Panc1 (cell line): ENCODE measurements at regions of chr4 and their contacts with region 1.

Region 1: DNA sequence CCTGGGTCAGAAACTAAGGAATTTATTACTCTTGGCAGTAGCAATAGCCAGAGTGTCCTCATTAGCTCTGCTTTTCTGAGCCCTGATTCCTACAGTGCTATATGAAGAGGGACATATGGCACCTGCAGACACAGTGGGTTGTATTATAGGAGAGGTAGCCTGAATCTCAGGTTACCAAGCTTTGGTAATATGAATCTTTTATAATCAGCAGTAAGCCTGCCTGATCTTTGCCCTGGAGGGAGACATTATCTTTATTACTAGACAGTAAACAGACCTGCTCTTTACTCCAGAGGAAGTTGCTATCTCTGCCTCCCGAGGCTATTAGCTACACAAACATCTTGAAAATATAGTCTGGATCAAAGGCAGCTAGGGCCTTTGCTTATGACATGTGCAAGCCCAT is 62.5 kb upstream of the HOPX start:
- DNase-seq: no peak
- ATAC-seq: no peak
- H3K4me3 ChIP-seq: no peak overlapping the region
- H3K27ac ChIP-seq: no peak overlapping the region
- H3K4me1 ChIP-seq: no peaks in the 10 kb centered on the region; the same call in 1 of the 2 replicates
- H3K27me3 ChIP-seq: no peaks in the 10 kb centered on the region
- CTCF ChIP-seq: no peak

Region 2: GRCh38 chr4:56712049-56712448 is 31.5 kb before region 1 on chr4:
- CTCF ChIA-PET with region 1: no interaction called
- POLR2A ChIA-PET with region 1: no interaction called
- in situ Hi-C with region 1: no loop called
- intact Hi-C with region 1: no loop called
- DNase-seq: no peak
- ATAC-seq: no peak
- H3K4me3 ChIP-seq: no peak overlapping the region
- H3K27ac ChIP-seq: no peak overlapping the region
- H3K4me1 ChIP-seq: no peaks in the 10 kb centered on the region
- H3K27me3 ChIP-seq: no peaks in the 10 kb centered on the region; the same call in 1 of the 2 replicates
- CTCF ChIP-seq: no peak

Region 3: GRCh38 chr4:56762497-56763250 is 19.1 kb after region 1 on chr4:
- CTCF ChIA-PET with region 1: interaction called, 10 read pairs
- POLR2A ChIA-PET with region 1: no interaction called
- in situ Hi-C with region 1: no loop called
- intact Hi-C with region 1: no loop called
- DNase-seq: no peak
- ATAC-seq: no peak
- H3K4me3 ChIP-seq: no peak overlapping the region
- H3K27ac ChIP-seq: no peak overlapping the region
- H3K4me1 ChIP-seq: no peaks in the 10 kb centered on the region
- H3K27me3 ChIP-seq: no peaks in the 10 kb centered on the region
- CTCF ChIP-seq: no peak

Region 4: DNA sequence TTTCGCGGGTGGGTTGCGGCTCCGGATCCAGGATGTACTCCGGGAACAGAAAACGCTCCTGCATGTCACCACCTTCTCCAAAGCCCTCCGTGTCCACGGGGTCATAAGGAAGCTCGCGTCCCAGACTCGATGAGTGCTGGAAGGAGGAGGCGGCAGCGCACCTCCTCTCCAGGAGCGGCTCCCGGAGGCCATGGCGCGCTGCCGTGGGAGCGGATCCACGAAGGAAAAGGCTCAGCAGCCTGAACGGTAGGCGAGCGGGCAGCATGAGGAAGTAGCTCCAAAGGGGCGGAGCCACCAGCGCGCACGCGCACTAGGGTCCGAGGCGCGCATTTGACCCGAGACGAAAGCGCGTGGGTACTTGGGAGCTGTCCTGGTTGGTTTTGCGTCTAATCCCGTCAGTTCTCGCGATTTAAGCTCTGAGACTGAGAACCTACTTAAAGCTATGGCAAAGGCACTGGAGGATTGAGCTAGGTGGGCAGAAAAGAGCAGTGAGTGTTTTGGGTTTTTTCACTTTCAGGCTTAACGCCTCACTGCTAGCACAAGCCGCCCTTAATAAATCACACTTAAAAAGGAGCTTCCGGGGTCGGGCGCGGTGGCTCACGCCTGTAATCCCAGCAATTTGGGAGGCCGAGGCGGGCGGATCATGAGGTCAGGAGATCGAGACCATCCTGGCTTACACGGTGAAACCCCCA is 233.9 kb after region 1 on chr4 and contains the start of gene NOA1:
- CTCF ChIA-PET with region 1: no interaction called
- POLR2A ChIA-PET with region 1: no interaction called
- in situ Hi-C with region 1: no loop called
- intact Hi-C with region 1: no loop called
- DNase-seq: peak; percentile 95
- ATAC-seq: peak; percentile 87
- H3K4me3 ChIP-seq: peak within 1 kb of the TSS; percentile 74 to 96
- H3K27ac ChIP-seq: peak within 1 kb of the TSS; percentile 95
- H3K4me1 ChIP-seq: peaks cover 13% of the 10 kb centered on the region
- H3K27me3 ChIP-seq: no peaks in the 10 kb centered on the region
- CTCF ChIP-seq: no peak
- total RNA-seq, gene NOA1: 11.8 TPM